ENCODE measurements at regions of chr3 and their contacts with region 1.

Region 1: GRCh38 chr3:186806089-186807055 is at the start of gene RFC4:
- DNase-seq: peak; percentile 60 to 91 (median 85)
- ATAC-seq: peak; percentile 86
- H3K4me3 ChIP-seq: peak within 1 kb of the TSS; percentile 81 to 97
- H3K4me3 Mint-ChIP-seq: peak within 1 kb of the TSS; percentile 97
- H3K27ac ChIP-seq: peak within 1 kb of the TSS; percentile 89 to 92
- H3K27ac Mint-ChIP-seq: peak within 1 kb of the TSS; percentile 97
- H3K4me1 ChIP-seq: peaks cover 23% of the 10 kb centered on the region
- H3K4me1 Mint-ChIP-seq: peaks cover 22% of the 10 kb centered on the region
- H3K27me3 ChIP-seq: no peaks in the 10 kb centered on the region
- H3K27me3 Mint-ChIP-seq: no peaks in the 10 kb centered on the region
- CTCF ChIP-seq: no peak
- total RNA-seq, gene RFC4: 12.7 to 13.9 TPM

Region 2: GRCh38 chr3:186635532-186635931 is 170.8 kb before region 1 on chr3:
- CTCF ChIA-PET with region 1: no interaction called
- POLR2A ChIA-PET with region 1: no interaction called
- intact Hi-C with region 1: no loop called
- DNase-seq: no peak
- ATAC-seq: no peak
- H3K4me3 ChIP-seq: no peak overlapping the region
- H3K4me3 Mint-ChIP-seq: no peak overlapping the region
- H3K27ac ChIP-seq: no peak overlapping the region
- H3K27ac Mint-ChIP-seq: no peak overlapping the region
- H3K4me1 ChIP-seq: no peaks in the 10 kb centered on the region
- H3K4me1 Mint-ChIP-seq: no peaks in the 10 kb centered on the region
- H3K27me3 ChIP-seq: no peaks in the 10 kb centered on the region
- H3K27me3 Mint-ChIP-seq: peaks cover 16% of the 10 kb centered on the region
- CTCF ChIP-seq: no peak

Region 3: GRCh38 chr3:186772701-186773424 is 33.5 kb before region 1 on chr3:
- CTCF ChIA-PET with region 1: no interaction called
- POLR2A ChIA-PET with region 1: interaction called, 4 read pairs
- intact Hi-C with region 1: loop called in 1 of 2 experiments (anchors 5 kb)
- DNase-seq: peak; percentile 8 to 81 (median 61)
- ATAC-seq: peak; percentile 86
- H3K4me3 ChIP-seq: peak overlapping the region; percentile 70 to 77
- H3K4me3 Mint-ChIP-seq: peak overlapping the region; percentile 97
- H3K27ac ChIP-seq: peak overlapping the region; percentile 55 to 86
- H3K27ac Mint-ChIP-seq: peak overlapping the region; percentile 95
- H3K4me1 ChIP-seq: peaks cover 12% of the 10 kb centered on the region
- H3K4me1 Mint-ChIP-seq: peaks cover 17% of the 10 kb centered on the region
- H3K27me3 ChIP-seq: no peaks in the 10 kb centered on the region
- H3K27me3 Mint-ChIP-seq: no peaks in the 10 kb centered on the region
- CTCF ChIP-seq: no peak

Region 4: GRCh38 chr3:186849374-186849975 is 43.1 kb after region 1 on chr3:
- CTCF ChIA-PET with region 1: no interaction called
- POLR2A ChIA-PET with region 1: no interaction called
- intact Hi-C with region 1: no loop called
- DNase-seq: peak in 2 of 9 experiments; percentile 70 to 81
- ATAC-seq: peak; percentile 95
- H3K4me3 ChIP-seq: no peak overlapping the region
- H3K4me3 Mint-ChIP-seq: no peak overlapping the region
- H3K27ac ChIP-seq: no peak overlapping the region
- H3K27ac Mint-ChIP-seq: no peak overlapping the region
- H3K4me1 ChIP-seq: no peaks in the 10 kb centered on the region
- H3K4me1 Mint-ChIP-seq: peaks cover 19% of the 10 kb centered on the region
- H3K27me3 ChIP-seq: peaks cover 0 to 3% of the 10 kb centered on the region in 2 experiments
- H3K27me3 Mint-ChIP-seq: peaks cover 4% of the 10 kb centered on the region
- CTCF ChIP-seq: peak; percentile 73

Region 5: GRCh38 chr3:187264021-187264420 is 457.6 kb after region 1 on chr3:
- CTCF ChIA-PET with region 1: no interaction called
- POLR2A ChIA-PET with region 1: no interaction called
- intact Hi-C with region 1: no loop called
- DNase-seq: no peak
- ATAC-seq: no peak
- H3K4me3 ChIP-seq: no peak overlapping the region
- H3K4me3 Mint-ChIP-seq: no peak overlapping the region
- H3K27ac ChIP-seq: no peak overlapping the region
- H3K27ac Mint-ChIP-seq: no peak overlapping the region
- H3K4me1 ChIP-seq: no peaks in the 10 kb centered on the region
- H3K4me1 Mint-ChIP-seq: no peaks in the 10 kb centered on the region
- H3K27me3 ChIP-seq: no peaks in the 10 kb centered on the region
- H3K27me3 Mint-ChIP-seq: peaks cover 21% of the 10 kb centered on the region
- CTCF ChIP-seq: no peak